HepG2 (cell line): ENCODE measurements at regions of chr7 and their contacts with region 1.

Region 1: DNA sequence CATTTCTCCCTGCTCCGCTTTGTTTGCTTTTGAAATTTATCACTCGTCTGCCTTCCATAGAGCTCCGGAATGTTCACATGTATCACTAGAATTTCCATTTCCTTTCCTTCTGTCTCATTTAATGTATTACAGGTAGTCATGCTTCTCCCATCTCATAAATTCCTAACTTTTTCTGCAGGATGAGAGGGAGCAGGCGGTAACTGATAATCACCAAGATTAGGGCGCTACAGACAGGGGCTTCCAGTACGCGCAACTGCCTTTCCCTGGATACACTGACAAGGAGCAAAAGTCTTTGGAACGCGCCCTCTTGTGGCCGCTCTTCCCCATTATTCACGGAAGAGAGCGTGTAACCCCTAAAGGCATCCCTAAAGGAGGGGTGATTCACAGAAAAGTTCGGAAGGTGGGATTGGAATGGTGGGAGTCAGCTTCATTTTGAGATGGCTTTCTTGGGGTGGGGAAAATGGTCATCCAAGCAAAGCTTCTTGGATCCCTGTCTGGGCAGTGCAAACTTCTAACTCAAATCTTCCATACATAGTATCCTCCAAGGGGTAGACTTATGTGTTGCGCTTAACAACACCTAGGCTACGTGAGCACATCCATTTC is 6.5 kb downstream of the INHBA start:
- DNase-seq: peak; percentile 45
- ATAC-seq: peak; percentile 97
- H3K4me3 ChIP-seq: no peak overlapping the region
- H3K27ac ChIP-seq: no peak overlapping the region
- H3K4me1 ChIP-seq: no peaks in the 10 kb centered on the region
- H3K27me3 ChIP-seq: no peaks in the 10 kb centered on the region
- CTCF ChIP-seq: peak; percentile 77
- EP300 ChIP-seq: no peak
- POLR2A ChIP-seq: no peak
- RAD21 ChIP-seq: peak; percentile 45

Region 2: GRCh38 chr7:40232242-40232893 is 1464.0 kb before region 1 on chr7:
- CTCF ChIA-PET with region 1: no interaction called
- POLR2A ChIA-PET with region 1: no interaction called
- in situ Hi-C with region 1: loop called (anchors 25 kb)
- intact Hi-C with region 1: loop called (anchors 1 kb)
- DNase-seq: peak; percentile 43
- ATAC-seq: peak; percentile 75
- H3K4me3 ChIP-seq: no peak overlapping the region
- H3K27ac ChIP-seq: no peak overlapping the region
- H3K4me1 ChIP-seq: no peaks in the 10 kb centered on the region; the same call in 1 of the 2 replicates
- H3K27me3 ChIP-seq: no peaks in the 10 kb centered on the region
- CTCF ChIP-seq: peak; percentile 71
- EP300 ChIP-seq: no peak
- POLR2A ChIP-seq: no peak
- RAD21 ChIP-seq: no peak

Region 3: DNA sequence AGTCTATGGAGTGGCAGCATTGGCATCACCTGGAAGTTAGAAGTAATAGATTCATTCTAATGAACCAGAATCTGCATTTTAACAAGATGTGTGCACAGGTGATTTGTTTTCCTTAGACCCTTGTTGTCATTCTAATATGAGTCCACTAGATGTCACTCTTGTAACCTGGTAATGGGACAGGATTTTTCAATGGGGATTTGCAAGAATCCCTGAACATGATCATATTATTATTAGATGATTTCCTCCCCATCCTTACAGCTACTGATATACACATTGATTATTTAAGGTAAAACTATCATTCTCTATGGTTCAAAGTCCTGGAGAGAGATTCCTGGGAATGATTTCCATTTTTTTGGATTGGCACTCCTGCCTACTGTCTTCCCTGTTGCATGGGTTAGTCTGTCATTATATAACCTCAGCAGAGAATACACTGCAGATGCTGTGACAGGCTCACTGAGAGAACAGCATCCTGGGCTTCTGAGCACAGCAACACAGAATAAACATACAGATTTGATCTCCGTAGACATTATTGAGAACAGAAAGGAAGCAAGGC is 1366.7 kb before region 1 on chr7:
- CTCF ChIA-PET with region 1: no interaction called
- POLR2A ChIA-PET with region 1: no interaction called
- in situ Hi-C with region 1: loop called (anchors 10 kb)
- intact Hi-C with region 1: loop called (anchors 1 kb)
- DNase-seq: peak; percentile 52
- ATAC-seq: peak; percentile 52; the same call in 2 of the 3 replicates
- H3K4me3 ChIP-seq: no peak overlapping the region
- H3K27ac ChIP-seq: no peak overlapping the region
- H3K4me1 ChIP-seq: no peaks in the 10 kb centered on the region
- H3K27me3 ChIP-seq: no peaks in the 10 kb centered on the region
- CTCF ChIP-seq: peak; percentile 79
- EP300 ChIP-seq: no peak
- POLR2A ChIP-seq: no peak
- RAD21 ChIP-seq: peak; percentile 80

Region 4: GRCh38 chr7:41315764-41316163 is 380.7 kb before region 1 on chr7:
- CTCF ChIA-PET with region 1: no interaction called
- POLR2A ChIA-PET with region 1: no interaction called
- in situ Hi-C with region 1: no loop called
- intact Hi-C with region 1: loop called (anchors 10 kb)
- DNase-seq: no peak
- ATAC-seq: peak; percentile 80
- H3K4me3 ChIP-seq: peak overlapping the region in 1 of 3 experiments; percentile 13; a peak in 1 of 6 replicates
- H3K27ac ChIP-seq: peak overlapping the region; percentile 52
- H3K4me1 ChIP-seq: peaks cover 22% of the 10 kb centered on the region
- H3K27me3 ChIP-seq: no peaks in the 10 kb centered on the region
- CTCF ChIP-seq: peak; percentile 71
- EP300 ChIP-seq: no peak
- POLR2A ChIP-seq: no peak
- RAD21 ChIP-seq: no peak

Region 5: DNA sequence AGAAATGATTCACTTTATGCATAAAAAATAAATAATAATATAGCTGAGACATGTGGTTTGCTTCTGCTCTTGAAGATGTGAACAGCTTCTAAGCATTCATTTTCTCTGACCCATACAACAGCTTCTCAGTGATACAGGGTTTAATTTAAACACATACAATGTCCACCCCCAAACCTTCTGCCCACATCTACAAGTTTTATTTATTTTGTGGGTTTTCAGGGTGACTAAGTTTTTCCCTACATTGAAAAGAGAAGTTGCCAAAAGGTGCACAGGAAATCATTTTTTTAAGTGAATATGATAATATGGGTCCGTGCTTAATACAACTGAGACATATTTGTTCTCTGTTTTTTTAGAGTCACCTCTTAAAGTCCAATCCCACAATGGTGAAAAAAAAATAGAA is 10.7 kb before region 1 on chr7:
- CTCF ChIA-PET with region 1: no interaction called
- POLR2A ChIA-PET with region 1: no interaction called
- in situ Hi-C with region 1: no loop called
- intact Hi-C with region 1: no loop called
- DNase-seq: no peak
- ATAC-seq: no peak
- H3K4me3 ChIP-seq: no peak overlapping the region
- H3K27ac ChIP-seq: no peak overlapping the region
- H3K4me1 ChIP-seq: no peaks in the 10 kb centered on the region
- H3K27me3 ChIP-seq: no peaks in the 10 kb centered on the region
- CTCF ChIP-seq: no peak
- EP300 ChIP-seq: no peak
- POLR2A ChIP-seq: no peak
- RAD21 ChIP-seq: no peak